AG04450 (cell line): ENCODE measurements at regions of chr2 and their contacts with region 1.

Region 1: GRCh38 chr2:31523871-31524492 is 56.8 kb downstream of the SRD5A2 start:
- DNase-seq: peak; percentile 13
- H3K4me3 ChIP-seq: no peak overlapping the region
- H3K27ac ChIP-seq: no peak overlapping the region
- H3K27me3 ChIP-seq: no peaks in the 10 kb centered on the region
- CTCF ChIP-seq: peak; percentile 79

Region 2: GRCh38 chr2:31354837-31355236 is 169.1 kb before region 1 on chr2:
- CTCF ChIA-PET with region 1: interaction called, 13 read pairs
- POLR2A ChIA-PET with region 1: no interaction called
- DNase-seq: no peak
- H3K4me3 ChIP-seq: no peak overlapping the region
- H3K27ac ChIP-seq: no peak overlapping the region
- H3K27me3 ChIP-seq: no peaks in the 10 kb centered on the region
- CTCF ChIP-seq: peak; percentile 52

Region 3: GRCh38 chr2:31420936-31421335 is 103.0 kb before region 1 on chr2:
- CTCF ChIA-PET with region 1: no interaction called
- POLR2A ChIA-PET with region 1: no interaction called
- DNase-seq: no peak
- H3K4me3 ChIP-seq: no peak overlapping the region
- H3K27ac ChIP-seq: no peak overlapping the region
- H3K27me3 ChIP-seq: no peaks in the 10 kb centered on the region
- CTCF ChIP-seq: no peak

Region 4: DNA sequence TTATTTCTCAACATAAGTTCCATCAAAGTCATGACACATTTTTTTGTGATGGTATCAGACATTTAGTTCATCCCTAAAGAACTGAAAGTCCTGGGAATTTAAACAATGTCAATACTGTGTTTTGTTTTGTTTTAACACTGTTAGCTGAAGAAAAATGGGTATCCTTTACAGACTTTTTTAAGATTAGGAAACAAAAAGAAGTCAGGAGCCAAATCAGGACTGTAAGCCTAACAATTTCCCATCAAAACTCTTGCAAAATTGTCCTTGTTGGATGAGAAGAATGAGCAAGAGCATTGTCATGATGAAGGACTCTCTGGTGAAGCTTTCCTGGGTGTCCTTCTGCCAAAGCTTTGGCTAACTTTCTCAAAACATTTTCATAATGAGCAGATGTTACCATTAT is 12.6 kb before region 1 on chr2:
- CTCF ChIA-PET with region 1: interaction called, 17 read pairs
- POLR2A ChIA-PET with region 1: no interaction called
- DNase-seq: no peak
- H3K4me3 ChIP-seq: no peak overlapping the region
- H3K27ac ChIP-seq: no peak overlapping the region
- H3K27me3 ChIP-seq: no peaks in the 10 kb centered on the region
- CTCF ChIP-seq: no peak